Transverse colon (tissue), 4 donors: ENCODE measurements at regions of chr15 and their contacts with region 1.

Region 1: GRCh38 chr15:90101969-90102890 is at the start of gene IDH2:
- DNase-seq: peak; percentile 87
- H3K4me3 ChIP-seq: peak within 1 kb of the TSS; percentile 67 to 93 (median 92)
- H3K27ac ChIP-seq: peak within 1 kb of the TSS; percentile 94 to 99 (median 97)
- H3K4me1 ChIP-seq: peaks cover 10 to 67% (median 60%) of the 10 kb centered on the region in 4 donors
- H3K27me3 ChIP-seq: no peaks in the 10 kb centered on the region
- CTCF ChIP-seq: peak in 2 of 5 experiments; percentile 24 to 31
- EP300 ChIP-seq: no peak
- POLR2A ChIP-seq: peak; percentile 79
- total RNA-seq, gene IDH2: 19.1 to 101 (median 85.1) TPM

Region 2: GRCh38 chr15:90165659-90166421 is 63.6 kb after region 1 on chr15:
- in situ Hi-C with region 1: no loop called
- intact Hi-C with region 1: no loop called
- DNase-seq: peak; percentile 92
- H3K4me3 ChIP-seq: no peak overlapping the region
- H3K27ac ChIP-seq: peak overlapping the region; percentile 82 to 89 (median 83)
- H3K4me1 ChIP-seq: peaks cover 16 to 67% (median 43%) of the 10 kb centered on the region in 4 donors
- H3K27me3 ChIP-seq: no peaks in the 10 kb centered on the region
- CTCF ChIP-seq: no peak
- EP300 ChIP-seq: peak; percentile 55
- POLR2A ChIP-seq: peak; percentile 18

Region 3: DNA sequence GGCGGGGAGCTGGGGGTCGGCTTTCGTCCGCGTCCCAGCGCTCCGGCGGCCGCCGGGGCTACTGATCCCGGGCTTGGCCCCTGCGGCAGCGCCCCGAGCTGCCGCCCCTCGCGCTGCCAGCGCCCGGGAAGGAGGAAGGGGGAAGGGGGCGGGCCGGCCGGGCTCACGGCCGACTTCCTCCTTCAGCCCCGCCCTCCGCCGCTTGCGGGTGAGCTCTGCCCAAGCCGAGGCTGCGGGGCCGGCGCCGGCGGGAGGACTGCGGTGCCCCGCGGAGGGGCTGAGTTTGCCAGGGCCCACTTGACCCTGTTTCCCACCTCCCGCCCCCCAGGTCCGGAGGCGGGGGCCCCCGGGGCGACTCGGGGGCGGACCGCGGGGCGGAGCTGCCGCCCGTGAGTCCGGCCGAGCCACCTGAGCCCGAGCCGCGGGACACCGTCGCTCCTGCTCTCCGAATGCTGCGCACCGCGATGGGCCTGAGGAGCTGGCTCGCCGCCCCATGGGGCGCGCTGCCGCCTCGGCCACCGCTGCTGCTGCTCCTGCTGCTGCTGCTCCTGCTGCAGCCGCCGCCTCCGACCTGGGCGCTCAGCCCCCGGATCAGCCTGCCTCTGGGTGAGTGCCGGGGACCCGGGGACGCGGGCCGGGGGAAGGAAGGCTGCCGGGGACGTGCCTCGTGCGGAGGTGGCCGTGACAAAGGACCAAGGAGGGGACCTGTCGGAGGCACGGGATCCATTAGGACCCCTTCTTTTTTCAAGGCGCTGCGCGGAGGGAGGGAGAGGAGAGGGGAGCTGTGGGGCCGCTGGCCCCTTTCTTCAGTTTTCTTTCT is 99.1 kb after region 1 on chr15 and contains the start of gene SEMA4B:
- in situ Hi-C with region 1: no loop called
- intact Hi-C with region 1: no loop called
- DNase-seq: peak; percentile 87
- H3K4me3 ChIP-seq: peak within 1 kb of the TSS; percentile 60 to 96 (median 78)
- H3K27ac ChIP-seq: peak within 1 kb of the TSS; percentile 82 to 91 (median 88)
- H3K4me1 ChIP-seq: peaks cover 17 to 32% (median 22%) of the 10 kb centered on the region in 4 donors
- H3K27me3 ChIP-seq: no peaks in the 10 kb centered on the region
- CTCF ChIP-seq: no peak
- EP300 ChIP-seq: no peak
- POLR2A ChIP-seq: peak; percentile 68
- total RNA-seq, gene SEMA4B: 115 to 193 (median 134) TPM

Region 4: GRCh38 chr15:90233376-90234095 is 131.3 kb after region 1 on chr15 and contains the start of gene CIB1:
- in situ Hi-C with region 1: no loop called
- intact Hi-C with region 1: loop called (anchors 2 kb)
- DNase-seq: peak; percentile 99
- H3K4me3 ChIP-seq: peak within 1 kb of the TSS; percentile 67 to 92 (median 75)
- H3K27ac ChIP-seq: peak within 1 kb of the TSS; percentile 90 to 99 (median 96)
- H3K4me1 ChIP-seq: peaks cover 28 to 53% (median 43%) of the 10 kb centered on the region in 4 donors
- H3K27me3 ChIP-seq: no peaks in the 10 kb centered on the region
- CTCF ChIP-seq: peak in 3 of 5 experiments; percentile 55 to 85 (median 58)
- EP300 ChIP-seq: peak; percentile 28
- POLR2A ChIP-seq: peak; percentile 93
- total RNA-seq, gene CIB1: 38.4 to 156 (median 131) TPM

Region 5: GRCh38 chr15:91429973-91430372 is 1327.7 kb after region 1 on chr15:
- in situ Hi-C with region 1: no loop called
- intact Hi-C with region 1: no loop called
- DNase-seq: no peak
- H3K4me3 ChIP-seq: no peak overlapping the region
- H3K27ac ChIP-seq: no peak overlapping the region
- H3K4me1 ChIP-seq: no peaks in the 10 kb centered on the region
- H3K27me3 ChIP-seq: no peaks in the 10 kb centered on the region
- CTCF ChIP-seq: no peak
- EP300 ChIP-seq: no peak
- POLR2A ChIP-seq: no peak